Caco-2 (cell line): ENCODE measurements at regions of chr1 and their contacts with region 1.

Region 1: GRCh38 chr1:205061665-205062069 is 18.7 kb downstream of the CNTN2 start:
- DNase-seq: peak; percentile 71 to 82
- H3K4me3 ChIP-seq: no peak overlapping the region
- H3K4me3 Mint-ChIP-seq: no peak overlapping the region
- H3K27ac Mint-ChIP-seq: no peak overlapping the region
- H3K4me1 ChIP-seq: peaks cover 6% of the 10 kb centered on the region; the same call in 1 of the 2 replicates
- H3K4me1 Mint-ChIP-seq: no peaks in the 10 kb centered on the region
- H3K27me3 ChIP-seq: no peaks in the 10 kb centered on the region
- H3K27me3 Mint-ChIP-seq: peaks cover 2% of the 10 kb centered on the region
- CTCF ChIP-seq: peak; percentile 87 to 91

Region 2: DNA sequence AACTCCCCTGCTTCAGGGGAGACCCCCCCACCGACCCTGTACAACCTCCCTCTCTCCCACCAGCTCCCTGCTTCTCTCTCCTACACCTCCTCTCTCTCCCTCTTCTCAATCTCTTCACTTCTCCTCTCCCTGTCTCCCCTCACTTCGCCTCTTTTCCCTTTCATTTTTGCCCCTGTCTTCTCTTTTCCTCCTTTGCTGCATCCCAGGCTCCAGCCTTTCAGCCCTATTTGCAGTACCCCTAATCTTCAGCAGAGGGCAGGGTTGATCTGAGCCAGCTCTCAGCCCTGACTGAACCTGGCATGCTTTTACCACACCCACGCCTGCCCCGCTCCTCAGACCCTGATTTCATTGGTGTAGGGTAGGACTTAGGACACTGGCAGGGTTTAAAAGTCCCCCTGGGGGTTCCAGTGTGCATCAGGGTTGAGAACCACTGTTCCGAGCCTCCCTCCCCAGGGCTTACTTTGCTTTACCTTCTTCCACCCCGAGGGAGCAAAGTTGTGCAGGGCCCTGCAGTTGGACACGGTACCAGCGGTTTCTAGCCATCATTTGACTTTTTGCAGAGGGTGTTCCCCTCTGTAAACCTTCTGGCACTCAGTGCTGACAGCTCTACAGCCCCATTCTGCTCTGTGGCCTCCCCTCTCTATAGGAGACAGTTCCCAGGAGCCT is 86.0 kb before region 1 on chr1:
- CTCF ChIA-PET with region 1: interaction called, 40 read pairs
- POLR2A ChIA-PET with region 1: no interaction called
- intact Hi-C with region 1: loop called (anchors 1 kb)
- DNase-seq: peak; percentile 62 to 77
- H3K4me3 ChIP-seq: no peak overlapping the region
- H3K4me3 Mint-ChIP-seq: no peak overlapping the region
- H3K27ac Mint-ChIP-seq: no peak overlapping the region
- H3K4me1 ChIP-seq: no peaks in the 10 kb centered on the region
- H3K4me1 Mint-ChIP-seq: no peaks in the 10 kb centered on the region
- H3K27me3 ChIP-seq: no peaks in the 10 kb centered on the region
- H3K27me3 Mint-ChIP-seq: peaks cover 11% of the 10 kb centered on the region
- CTCF ChIP-seq: peak; percentile 88 to 89

Region 3: GRCh38 chr1:205020466-205020865 is 41.2 kb before region 1 on chr1:
- CTCF ChIA-PET with region 1: interaction called, 15 read pairs
- POLR2A ChIA-PET with region 1: no interaction called
- intact Hi-C with region 1: no loop called
- DNase-seq: no peak
- H3K4me3 ChIP-seq: no peak overlapping the region
- H3K4me3 Mint-ChIP-seq: no peak overlapping the region
- H3K27ac Mint-ChIP-seq: no peak overlapping the region
- H3K4me1 ChIP-seq: no peaks in the 10 kb centered on the region
- H3K4me1 Mint-ChIP-seq: no peaks in the 10 kb centered on the region
- H3K27me3 ChIP-seq: peaks cover 2% of the 10 kb centered on the region; the same call in 1 of the 2 replicates
- H3K27me3 Mint-ChIP-seq: peaks cover 20% of the 10 kb centered on the region
- CTCF ChIP-seq: no peak

Region 4: GRCh38 chr1:205073511-205073910 is 11.8 kb after region 1 on chr1:
- CTCF ChIA-PET with region 1: interaction called, 13 read pairs
- POLR2A ChIA-PET with region 1: no interaction called
- intact Hi-C with region 1: no loop called
- DNase-seq: no peak
- H3K4me3 ChIP-seq: no peak overlapping the region
- H3K4me3 Mint-ChIP-seq: no peak overlapping the region
- H3K27ac Mint-ChIP-seq: no peak overlapping the region
- H3K4me1 ChIP-seq: peaks cover 7% of the 10 kb centered on the region; the same call in 1 of the 2 replicates
- H3K4me1 Mint-ChIP-seq: no peaks in the 10 kb centered on the region
- H3K27me3 ChIP-seq: no peaks in the 10 kb centered on the region
- H3K27me3 Mint-ChIP-seq: no peaks in the 10 kb centered on the region
- CTCF ChIP-seq: no peak

Region 5: DNA sequence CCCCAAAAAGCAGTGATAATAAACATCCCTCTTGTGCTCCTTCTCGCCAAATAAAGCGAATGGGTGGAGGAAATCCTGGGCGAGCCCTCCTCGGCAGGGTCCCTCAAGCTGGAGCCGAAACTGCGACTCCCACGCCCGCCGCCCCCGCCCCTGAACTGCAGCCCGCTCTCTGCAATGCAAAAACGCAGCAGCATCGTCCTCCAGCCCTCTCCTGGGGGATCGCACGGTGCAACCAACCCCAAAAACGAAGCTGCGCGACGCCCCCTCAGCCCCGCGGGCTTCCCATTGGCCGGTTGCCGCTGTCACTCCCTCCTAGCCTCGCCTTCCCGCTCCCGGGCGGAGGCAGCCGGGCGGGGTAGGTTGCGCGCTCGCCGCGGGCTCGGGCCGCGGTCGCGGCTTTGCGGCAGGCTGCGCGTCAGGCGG is 165.9 kb after region 1 on chr1 and contains the start of gene TMCC2:
- CTCF ChIA-PET with region 1: interaction called, 17 read pairs
- POLR2A ChIA-PET with region 1: no interaction called
- intact Hi-C with region 1: no loop called
- DNase-seq: peak; percentile 85 to 87
- H3K4me3 ChIP-seq: peak within 1 kb of the TSS; percentile 66
- H3K4me3 Mint-ChIP-seq: peak within 1 kb of the TSS; percentile 83
- H3K27ac Mint-ChIP-seq: no peak within 1 kb of the TSS
- H3K4me1 ChIP-seq: no peaks in the 10 kb centered on the region
- H3K4me1 Mint-ChIP-seq: peaks cover 7% of the 10 kb centered on the region
- H3K27me3 ChIP-seq: no peaks in the 10 kb centered on the region; the same call in 1 of the 2 replicates
- H3K27me3 Mint-ChIP-seq: peaks cover 5% of the 10 kb centered on the region
- CTCF ChIP-seq: no peak
- total RNA-seq, gene TMCC2: 0.60 and 0.91 TPM in 2 replicates